ENCODE measurements at regions of chr13 and their contacts with region 1.

Region 1: DNA sequence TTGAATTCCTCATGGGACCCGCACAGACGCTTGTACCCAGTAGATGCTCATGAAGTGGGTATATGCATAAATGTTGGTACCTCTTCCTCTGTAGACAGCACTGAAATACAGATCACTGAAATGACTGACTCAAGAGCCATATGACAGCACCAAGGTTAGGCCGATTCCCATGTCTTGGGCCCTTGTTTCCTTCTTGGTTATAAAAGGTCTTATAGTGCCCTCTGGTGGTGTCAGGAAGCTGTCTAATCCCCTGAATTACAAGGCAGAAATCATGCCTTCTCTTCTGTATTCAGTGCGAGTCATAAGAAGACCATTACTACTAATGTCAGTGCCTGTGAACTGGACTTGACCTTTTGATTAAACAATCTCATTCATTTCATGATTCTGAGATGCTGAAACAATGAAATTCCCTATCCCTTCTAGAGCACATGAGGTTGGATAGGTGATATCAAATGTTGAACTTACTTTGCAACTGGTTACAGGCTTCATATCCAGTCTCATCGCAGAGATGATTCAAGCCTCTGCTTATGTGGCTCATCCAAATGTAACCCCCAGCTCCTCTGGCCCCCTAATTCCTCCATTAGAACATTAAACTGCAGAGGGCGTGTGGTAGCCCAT is 59.7 kb downstream of the SPATA13 start:
- DNase-seq: peak in 10 of 14 experiments; percentile 28 to 86 (median 34)
- ATAC-seq: peak; percentile 92
- H3K4me3 ChIP-seq: no peak overlapping the region
- H3K4me3 Mint-ChIP-seq: no peak overlapping the region
- H3K27ac ChIP-seq: no peak overlapping the region
- H3K27ac Mint-ChIP-seq: no peak overlapping the region
- H3K4me1 ChIP-seq: peaks cover 26% of the 10 kb centered on the region
- H3K4me1 Mint-ChIP-seq: peaks cover 23% of the 10 kb centered on the region
- H3K27me3 ChIP-seq: no peaks in the 10 kb centered on the region
- H3K27me3 Mint-ChIP-seq: no peaks in the 10 kb centered on the region
- CTCF ChIP-seq: peak; percentile 77

Region 2: DNA sequence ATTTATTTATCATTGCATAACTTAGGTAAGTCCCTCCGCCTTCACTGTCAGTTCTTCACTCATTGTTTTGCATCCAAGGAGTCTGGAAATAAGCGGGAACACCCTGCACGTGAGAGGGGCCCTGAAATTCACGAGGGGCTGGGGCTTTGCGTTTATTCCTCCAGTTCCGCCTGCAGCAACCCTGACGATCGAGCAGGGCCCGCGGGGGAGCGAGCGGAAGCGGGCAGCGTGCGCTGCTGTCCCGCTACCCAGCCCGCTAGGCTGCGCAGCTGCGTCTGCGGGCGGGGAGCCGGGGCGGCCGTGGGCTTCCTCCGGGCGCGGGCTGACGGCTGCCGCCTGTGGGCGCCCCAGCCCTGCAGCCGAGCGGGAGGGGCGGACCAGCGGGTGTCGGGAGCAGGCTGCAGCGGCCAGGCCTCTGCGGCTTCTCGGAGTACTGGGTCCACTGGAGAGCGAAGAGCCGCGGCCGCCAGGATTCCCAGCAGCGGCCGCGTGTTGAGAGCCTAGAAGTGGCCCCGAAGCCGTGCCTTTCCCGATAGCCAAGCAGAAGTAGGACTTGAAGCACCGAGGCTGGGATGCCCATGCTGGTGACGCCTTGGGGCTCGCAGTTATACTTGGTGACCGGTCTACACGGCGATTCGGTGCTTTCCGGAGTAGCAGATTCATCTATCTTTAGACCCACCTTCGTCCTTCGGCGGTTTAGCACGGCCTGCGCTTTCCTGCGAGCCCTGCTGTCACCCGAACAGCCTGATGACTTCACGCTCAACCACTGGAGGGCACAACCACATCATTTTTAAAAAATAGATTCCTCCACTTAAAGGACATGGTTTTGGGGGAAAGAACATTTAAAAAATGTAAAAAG is 753.8 kb before region 1 on chr13:
- CTCF ChIA-PET with region 1: no interaction called
- POLR2A ChIA-PET with region 1: no interaction called
- intact Hi-C with region 1: loop called (anchors 1 to 2 kb)
- DNase-seq: peak; percentile 28 to 81 (median 52)
- ATAC-seq: peak; percentile 88
- H3K4me3 ChIP-seq: peak overlapping the region; percentile 49
- H3K4me3 Mint-ChIP-seq: peak overlapping the region; percentile 86
- H3K27ac ChIP-seq: no peak overlapping the region
- H3K27ac Mint-ChIP-seq: no peak overlapping the region
- H3K4me1 ChIP-seq: peaks cover 14% of the 10 kb centered on the region
- H3K4me1 Mint-ChIP-seq: no peaks in the 10 kb centered on the region
- H3K27me3 ChIP-seq: no peaks in the 10 kb centered on the region
- H3K27me3 Mint-ChIP-seq: peaks cover 6% of the 10 kb centered on the region
- CTCF ChIP-seq: peak; percentile 63

Region 3: GRCh38 chr13:23921451-23921888 is 298.7 kb before region 1 on chr13:
- CTCF ChIA-PET with region 1: interaction called, 3 read pairs
- POLR2A ChIA-PET with region 1: interaction called, 3 read pairs
- intact Hi-C with region 1: loop called (anchors 1 to 2 kb)
- DNase-seq: peak in 3 of 14 experiments; percentile 45 to 46 (median 46)
- ATAC-seq: no peak
- H3K4me3 ChIP-seq: no peak overlapping the region
- H3K4me3 Mint-ChIP-seq: no peak overlapping the region
- H3K27ac ChIP-seq: no peak overlapping the region
- H3K27ac Mint-ChIP-seq: no peak overlapping the region
- H3K4me1 ChIP-seq: no peaks in the 10 kb centered on the region
- H3K4me1 Mint-ChIP-seq: no peaks in the 10 kb centered on the region
- H3K27me3 ChIP-seq: peaks cover 4 to 14% of the 10 kb centered on the region in 2 experiments
- H3K27me3 Mint-ChIP-seq: peaks cover 55% of the 10 kb centered on the region
- CTCF ChIP-seq: peak; percentile 57

Region 4: GRCh38 chr13:23969647-23970046 is 250.5 kb before region 1 on chr13:
- CTCF ChIA-PET with region 1: no interaction called
- POLR2A ChIA-PET with region 1: no interaction called
- intact Hi-C with region 1: loop called in 1 of 2 experiments (anchors 5 kb)
- DNase-seq: no peak
- ATAC-seq: no peak
- H3K4me3 ChIP-seq: no peak overlapping the region
- H3K4me3 Mint-ChIP-seq: no peak overlapping the region
- H3K27ac ChIP-seq: no peak overlapping the region
- H3K27ac Mint-ChIP-seq: no peak overlapping the region
- H3K4me1 ChIP-seq: peaks cover 12% of the 10 kb centered on the region
- H3K4me1 Mint-ChIP-seq: peaks cover 13% of the 10 kb centered on the region
- H3K27me3 ChIP-seq: no peaks in the 10 kb centered on the region
- H3K27me3 Mint-ChIP-seq: no peaks in the 10 kb centered on the region
- CTCF ChIP-seq: no peak

Region 5: GRCh38 chr13:24020375-24020830 is 199.8 kb before region 1 on chr13:
- CTCF ChIA-PET with region 1: interaction called, 4 read pairs
- POLR2A ChIA-PET with region 1: no interaction called
- intact Hi-C with region 1: loop called in 1 of 2 experiments (anchors 1 kb)
- DNase-seq: peak in 6 of 14 experiments; percentile 6 to 55 (median 46)
- ATAC-seq: no peak
- H3K4me3 ChIP-seq: no peak overlapping the region
- H3K4me3 Mint-ChIP-seq: no peak overlapping the region
- H3K27ac ChIP-seq: no peak overlapping the region
- H3K27ac Mint-ChIP-seq: no peak overlapping the region
- H3K4me1 ChIP-seq: no peaks in the 10 kb centered on the region
- H3K4me1 Mint-ChIP-seq: no peaks in the 10 kb centered on the region
- H3K27me3 ChIP-seq: no peaks in the 10 kb centered on the region
- H3K27me3 Mint-ChIP-seq: no peaks in the 10 kb centered on the region
- CTCF ChIP-seq: peak; percentile 55

Region 6: DNA sequence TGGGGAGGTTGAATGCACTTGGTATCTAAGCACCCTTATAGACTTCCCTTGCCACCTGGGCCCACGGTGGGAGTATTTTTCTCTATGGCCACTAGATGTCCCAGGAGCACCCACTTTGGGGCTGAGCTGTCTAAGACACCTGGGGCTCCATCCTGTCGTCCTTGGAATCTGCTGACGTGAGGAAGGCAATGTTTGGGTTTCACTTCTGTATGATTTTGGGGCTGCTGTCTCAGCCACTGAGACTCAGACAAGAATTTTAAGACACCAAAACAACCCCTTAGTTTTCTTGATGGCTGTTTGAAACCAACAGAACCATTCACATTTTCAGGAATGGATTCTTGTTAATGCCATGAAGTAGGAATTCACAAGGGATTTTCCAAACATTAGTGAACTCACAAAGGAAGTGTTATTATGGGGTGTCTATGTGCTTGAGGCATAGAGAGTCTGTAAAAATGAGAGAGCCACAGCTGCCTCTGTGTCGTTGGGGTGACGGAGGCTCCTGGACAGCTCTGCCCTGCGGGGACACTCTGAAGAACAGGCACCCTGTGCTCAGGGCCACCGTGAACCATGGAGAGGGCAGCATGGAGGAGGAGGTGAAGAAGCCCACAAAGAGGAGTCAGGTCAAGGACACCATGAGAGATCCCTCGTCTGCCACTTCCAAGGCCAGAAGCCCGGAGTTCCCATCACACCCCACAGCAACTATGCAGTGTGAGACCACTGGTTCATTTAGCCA is 166.5 kb before region 1 on chr13:
- CTCF ChIA-PET with region 1: interaction called, 12 read pairs
- POLR2A ChIA-PET with region 1: no interaction called
- intact Hi-C with region 1: loop called (anchors 1 kb)
- DNase-seq: peak; percentile 29 to 79 (median 46)
- ATAC-seq: peak; percentile 98
- H3K4me3 ChIP-seq: no peak overlapping the region
- H3K4me3 Mint-ChIP-seq: no peak overlapping the region
- H3K27ac ChIP-seq: no peak overlapping the region
- H3K27ac Mint-ChIP-seq: no peak overlapping the region
- H3K4me1 ChIP-seq: no peaks in the 10 kb centered on the region
- H3K4me1 Mint-ChIP-seq: peaks cover 10% of the 10 kb centered on the region
- H3K27me3 ChIP-seq: no peaks in the 10 kb centered on the region
- H3K27me3 Mint-ChIP-seq: peaks cover 15% of the 10 kb centered on the region
- CTCF ChIP-seq: peak; percentile 75

Region 7: GRCh38 chr13:24160454-24161009 is 59.7 kb before region 1 on chr13 and contains the start of gene SPATA13:
- CTCF ChIA-PET with region 1: no interaction called
- POLR2A ChIA-PET with region 1: no interaction called
- intact Hi-C with region 1: loop called in 1 of 2 experiments (anchors 5 kb)
- DNase-seq: peak; percentile 89 to 99 (median 94)
- ATAC-seq: peak; percentile 92
- H3K4me3 ChIP-seq: peak within 1 kb of the TSS; percentile 81
- H3K4me3 Mint-ChIP-seq: peak within 1 kb of the TSS; percentile 90
- H3K27ac ChIP-seq: no peak within 1 kb of the TSS
- H3K27ac Mint-ChIP-seq: peak within 1 kb of the TSS; percentile 74
- H3K4me1 ChIP-seq: peaks cover 18% of the 10 kb centered on the region
- H3K4me1 Mint-ChIP-seq: peaks cover 14% of the 10 kb centered on the region
- H3K27me3 ChIP-seq: no peaks in the 10 kb centered on the region
- H3K27me3 Mint-ChIP-seq: no peaks in the 10 kb centered on the region
- CTCF ChIP-seq: no peak
- total RNA-seq, gene SPATA13: 87.7 to 94.6 TPM

Region 8: GRCh38 chr13:24261566-24261965 is 41.4 kb after region 1 on chr13:
- CTCF ChIA-PET with region 1: no interaction called
- POLR2A ChIA-PET with region 1: no interaction called
- intact Hi-C with region 1: no loop called
- DNase-seq: peak in 6 of 14 experiments; percentile 36 to 84 (median 69)
- ATAC-seq: peak; percentile 68
- H3K4me3 ChIP-seq: no peak overlapping the region
- H3K4me3 Mint-ChIP-seq: peak overlapping the region; percentile 81
- H3K27ac ChIP-seq: peak overlapping the region; percentile 19 to 59
- H3K27ac Mint-ChIP-seq: peak overlapping the region; percentile 97
- H3K4me1 ChIP-seq: peaks cover 77% of the 10 kb centered on the region
- H3K4me1 Mint-ChIP-seq: peaks cover 91% of the 10 kb centered on the region
- H3K27me3 ChIP-seq: no peaks in the 10 kb centered on the region
- H3K27me3 Mint-ChIP-seq: no peaks in the 10 kb centered on the region
- CTCF ChIP-seq: no peak